CD8-positive, alpha-beta T cell (primary cell): ENCODE measurements at regions of chr19 and their contacts with region 1.

Region 1: GRCh38 chr19:39078436-39079200 is 5.5 kb upstream of the ACP7 start:
- DNase-seq: no peak
- ATAC-seq: no peak
- H3K4me3 ChIP-seq: no peak overlapping the region
- H3K4me3 Mint-ChIP-seq: no peak overlapping the region
- H3K27ac ChIP-seq: no peak overlapping the region
- H3K27ac Mint-ChIP-seq: no peak overlapping the region
- H3K4me1 ChIP-seq: peaks cover 17% of the 10 kb centered on the region
- H3K4me1 Mint-ChIP-seq: peaks cover 21% of the 10 kb centered on the region
- H3K27me3 ChIP-seq: peaks cover 6% of the 10 kb centered on the region in 2 experiments
- H3K27me3 Mint-ChIP-seq: peaks cover 32% of the 10 kb centered on the region
- CTCF ChIP-seq: no peak

Region 2: DNA sequence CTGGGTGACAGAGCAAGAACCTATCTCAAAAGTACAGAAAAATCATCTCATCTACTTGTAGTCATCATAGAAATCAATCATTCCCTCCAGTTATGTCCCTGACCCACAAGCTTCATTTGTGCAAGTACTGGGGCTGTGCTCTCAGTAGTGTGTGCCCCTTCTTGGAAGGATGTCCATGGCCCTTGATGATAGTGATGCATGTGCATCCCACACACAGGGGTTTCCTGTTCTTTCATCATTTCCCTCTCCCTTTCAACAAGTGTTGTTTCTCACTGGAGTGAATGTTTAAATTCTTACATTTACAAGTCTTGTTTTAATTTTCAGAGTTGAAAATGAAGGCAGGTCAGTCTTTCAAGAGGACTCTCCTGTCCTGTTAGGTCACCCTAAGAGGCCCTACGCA is 525.2 kb after region 1 on chr19:
- CTCF ChIA-PET with region 1: no interaction called
- POLR2A ChIA-PET with region 1: no interaction called
- intact Hi-C with region 1: no loop called
- DNase-seq: no peak
- ATAC-seq: no peak
- H3K4me3 ChIP-seq: no peak overlapping the region
- H3K4me3 Mint-ChIP-seq: no peak overlapping the region
- H3K27ac ChIP-seq: no peak overlapping the region
- H3K27ac Mint-ChIP-seq: no peak overlapping the region
- H3K4me1 ChIP-seq: no peaks in the 10 kb centered on the region
- H3K4me1 Mint-ChIP-seq: no peaks in the 10 kb centered on the region
- H3K27me3 ChIP-seq: peaks cover 0 to 3% of the 10 kb centered on the region in 2 experiments
- H3K27me3 Mint-ChIP-seq: peaks cover 35% of the 10 kb centered on the region
- CTCF ChIP-seq: no peak

Region 3: DNA sequence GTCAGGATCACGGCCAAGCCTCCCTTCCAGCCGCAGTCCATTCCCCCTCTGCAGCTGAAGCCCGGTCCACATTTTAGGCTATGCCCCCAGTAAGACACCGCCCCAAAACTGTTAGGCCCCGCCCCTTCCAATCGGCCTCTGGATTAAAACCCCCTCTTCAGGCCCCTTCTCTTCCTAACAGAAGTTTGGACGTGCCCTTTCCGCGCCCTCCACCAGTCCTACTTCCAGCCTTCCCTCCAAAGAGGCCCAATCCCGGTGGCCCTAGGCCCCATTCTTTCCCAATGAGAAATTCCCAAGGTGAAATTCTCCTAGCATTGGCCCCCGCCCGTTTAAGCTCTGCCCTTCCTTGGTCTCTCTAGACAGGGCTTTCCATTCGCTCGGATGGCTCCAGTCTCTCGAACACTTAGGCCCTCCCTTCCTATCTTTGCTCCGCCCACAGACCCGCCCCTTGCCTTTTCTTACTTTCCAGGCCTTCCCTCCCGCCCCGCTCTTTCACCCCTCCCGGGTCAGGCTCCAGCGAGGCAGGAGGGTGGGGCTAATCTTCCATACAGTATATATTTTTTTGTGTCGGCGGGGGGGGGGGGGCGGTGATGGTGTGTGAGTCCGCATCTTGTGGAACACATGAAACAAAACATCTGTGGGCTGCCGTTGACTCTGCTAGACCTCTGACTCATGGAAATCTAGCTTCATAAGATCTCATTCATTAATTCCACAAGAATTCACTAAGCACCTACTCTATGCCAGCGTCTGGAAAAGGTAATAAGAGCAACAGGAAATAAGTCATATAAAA is 1536.2 kb after region 1 on chr19:
- CTCF ChIA-PET with region 1: no interaction called
- POLR2A ChIA-PET with region 1: no interaction called
- intact Hi-C with region 1: loop called in 1 of 2 experiments (anchors 5 kb)
- DNase-seq: peak in 8 of 9 experiments; percentile 57 to 83 (median 75)
- ATAC-seq: peak; percentile 14
- H3K4me3 ChIP-seq: peak overlapping the region; percentile 81 to 89
- H3K4me3 Mint-ChIP-seq: peak overlapping the region; percentile 94
- H3K27ac ChIP-seq: peak overlapping the region; percentile 13 to 57
- H3K27ac Mint-ChIP-seq: peak overlapping the region; percentile 91
- H3K4me1 ChIP-seq: peaks cover 20% of the 10 kb centered on the region
- H3K4me1 Mint-ChIP-seq: peaks cover 48% of the 10 kb centered on the region
- H3K27me3 ChIP-seq: no peaks in the 10 kb centered on the region
- H3K27me3 Mint-ChIP-seq: no peaks in the 10 kb centered on the region
- CTCF ChIP-seq: no peak